ENCODE measurements at regions of chr12 and their contacts with region 1.

Region 1: GRCh38 chr12:32586390-32586789 is 92.7 kb upstream of the DNM1L start:
- DNase-seq: no peak
- H3K4me3 Mint-ChIP-seq: peak overlapping the region; percentile 18
- H3K27ac Mint-ChIP-seq: peak overlapping the region; percentile 69
- H3K4me1 Mint-ChIP-seq: peaks cover 66% of the 10 kb centered on the region
- H3K27me3 Mint-ChIP-seq: no peaks in the 10 kb centered on the region

Region 2: GRCh38 chr12:31659087-31659933 is 927.1 kb before region 1 on chr12 and contains the start of gene ETFBKMT:
- intact Hi-C with region 1: loop called (anchors 10 kb)
- DNase-seq: peak; percentile 98
- H3K4me3 Mint-ChIP-seq: peak within 1 kb of the TSS; percentile 93
- H3K27ac Mint-ChIP-seq: peak within 1 kb of the TSS; percentile 99
- H3K4me1 Mint-ChIP-seq: peaks cover 15% of the 10 kb centered on the region
- H3K27me3 Mint-ChIP-seq: no peaks in the 10 kb centered on the region
- total RNA-seq, gene ETFBKMT: 0.52 and 0.84 TPM in 2 replicates

Region 3: DNA sequence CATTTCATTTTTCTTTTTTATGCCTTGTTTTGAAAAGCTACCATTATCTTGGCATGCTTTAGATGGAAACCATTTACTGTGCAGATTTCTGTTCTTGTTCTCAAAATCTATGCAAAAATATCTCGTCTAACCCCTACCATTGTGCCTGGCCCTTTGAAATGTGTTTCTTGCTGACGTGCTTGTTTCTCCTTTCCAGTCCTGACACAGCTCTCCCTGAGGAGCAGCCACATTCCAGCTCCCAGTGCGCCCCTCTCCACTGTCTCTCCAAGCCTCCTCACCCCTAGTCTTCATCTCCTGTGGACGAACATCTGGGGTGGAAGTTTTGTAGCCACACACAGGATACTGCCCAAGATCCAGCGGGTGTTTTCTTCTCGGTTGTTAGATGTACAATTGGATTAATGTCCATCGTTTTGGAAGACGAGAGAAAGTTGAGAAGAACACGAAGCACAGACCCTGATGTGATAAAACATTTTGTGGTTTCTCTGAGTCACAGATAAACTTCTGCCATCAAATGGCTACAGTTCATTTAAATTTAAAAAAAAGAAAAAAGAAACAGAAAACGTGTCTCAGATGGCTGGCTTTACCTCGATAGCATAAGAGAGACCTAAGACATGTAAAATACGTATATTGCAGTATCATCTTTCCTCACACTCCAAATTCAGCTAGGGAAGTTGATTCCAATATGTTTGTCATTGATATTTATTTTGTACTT is 208.9 kb before region 1 on chr12:
- intact Hi-C with region 1: no loop called
- DNase-seq: peak; percentile 35
- H3K4me3 Mint-ChIP-seq: no peak overlapping the region
- H3K27ac Mint-ChIP-seq: no peak overlapping the region
- H3K4me1 Mint-ChIP-seq: no peaks in the 10 kb centered on the region
- H3K27me3 Mint-ChIP-seq: peaks cover 19% of the 10 kb centered on the region

Region 4: GRCh38 chr12:32482226-32482625 is 104.2 kb before region 1 on chr12:
- intact Hi-C with region 1: no loop called
- DNase-seq: no peak
- H3K4me3 Mint-ChIP-seq: no peak overlapping the region
- H3K27ac Mint-ChIP-seq: no peak overlapping the region
- H3K4me1 Mint-ChIP-seq: peaks cover 2% of the 10 kb centered on the region
- H3K27me3 Mint-ChIP-seq: peaks cover 6% of the 10 kb centered on the region

Region 5: DNA sequence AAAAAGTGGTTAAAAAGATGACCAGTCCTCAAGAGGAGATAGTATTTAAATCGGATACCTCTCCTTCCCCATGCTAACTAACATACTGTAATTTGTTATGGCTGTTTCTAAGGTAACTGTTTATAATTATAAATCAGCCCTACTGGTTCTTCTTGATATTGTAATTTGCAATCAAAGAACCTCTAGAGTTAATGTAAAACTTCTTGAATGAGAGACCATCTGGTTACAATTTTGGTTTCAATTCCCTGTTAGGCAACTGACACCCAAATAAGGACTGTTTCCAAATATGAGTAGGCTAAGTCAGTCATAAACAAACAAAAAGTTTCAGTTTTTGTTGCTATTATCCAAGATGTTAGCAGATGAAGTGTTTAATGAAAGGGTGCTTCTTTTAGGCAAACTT is 27.5 kb before region 1 on chr12:
- intact Hi-C with region 1: loop called (anchors 1 kb)
- DNase-seq: no peak
- H3K4me3 Mint-ChIP-seq: no peak overlapping the region
- H3K27ac Mint-ChIP-seq: no peak overlapping the region
- H3K4me1 Mint-ChIP-seq: peaks cover 18% of the 10 kb centered on the region
- H3K27me3 Mint-ChIP-seq: peaks cover 4% of the 10 kb centered on the region

Region 6: GRCh38 chr12:32603858-32604257 is 17.5 kb after region 1 on chr12:
- intact Hi-C with region 1: loop called (anchors 1 kb)
- DNase-seq: peak; percentile 87
- H3K4me3 Mint-ChIP-seq: peak overlapping the region; percentile 4
- H3K27ac Mint-ChIP-seq: peak overlapping the region; percentile 43
- H3K4me1 Mint-ChIP-seq: peaks cover 18% of the 10 kb centered on the region
- H3K27me3 Mint-ChIP-seq: no peaks in the 10 kb centered on the region

Region 7: DNA sequence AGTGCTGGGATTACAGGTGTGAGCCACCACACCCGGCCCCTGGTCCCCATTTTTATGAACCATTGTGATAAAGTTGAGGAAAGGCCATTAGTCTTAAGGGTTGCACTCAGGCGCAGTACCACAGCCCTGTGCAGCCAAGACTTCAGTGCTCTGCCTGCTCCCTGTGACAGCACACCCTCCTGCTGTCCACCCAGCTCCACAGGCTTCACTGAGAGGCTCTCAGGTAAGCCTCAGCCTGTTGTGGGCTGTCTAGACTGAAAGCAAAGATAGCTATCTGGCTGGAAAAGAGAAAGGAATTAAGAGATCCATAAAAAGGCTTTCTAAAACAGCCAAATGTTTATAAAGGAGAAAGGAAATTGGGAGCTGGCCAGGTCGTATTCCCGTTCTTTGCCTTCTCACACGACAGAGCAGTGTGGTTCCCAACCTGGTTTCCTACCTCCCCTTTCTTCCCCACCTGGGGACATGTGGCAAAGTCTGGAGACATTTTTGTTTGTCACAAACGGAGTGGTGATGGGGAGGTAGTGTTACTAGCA is 73.6 kb after region 1 on chr12:
- intact Hi-C with region 1: loop called (anchors 5 kb)
- DNase-seq: no peak
- H3K4me3 Mint-ChIP-seq: no peak overlapping the region
- H3K27ac Mint-ChIP-seq: no peak overlapping the region
- H3K4me1 Mint-ChIP-seq: peaks cover 11% of the 10 kb centered on the region
- H3K27me3 Mint-ChIP-seq: no peaks in the 10 kb centered on the region

Region 8: GRCh38 chr12:32679091-32679919 is 92.9 kb after region 1 on chr12 and contains the start of gene DNM1L:
- intact Hi-C with region 1: loop called (anchors 5 kb)
- DNase-seq: peak; percentile 98
- H3K4me3 Mint-ChIP-seq: peak within 1 kb of the TSS; percentile 88
- H3K27ac Mint-ChIP-seq: peak within 1 kb of the TSS; percentile 93
- H3K4me1 Mint-ChIP-seq: peaks cover 21% of the 10 kb centered on the region
- H3K27me3 Mint-ChIP-seq: no peaks in the 10 kb centered on the region
- total RNA-seq, gene DNM1L: 83.3 and 90.7 TPM in 2 replicates

Measured in activated CD4-positive, alpha-beta T cell treated with anti-CD3 and anti-CD28 coated beads, Interleukin-2, amount 10 ng/mL, durations not matched to agents 24 days and 14 days (primary cell).